Natural killer cell (primary cell): ENCODE measurements at regions of chr11 and their contacts with region 1.

Region 1: GRCh38 chr11:129117595-129118350 is 74.4 kb downstream of the ARHGAP32 start:
- DNase-seq: peak in 1 of 2 donors; percentile 77
- ATAC-seq: peak; percentile 58 to 75 (median 67)
- H3K4me3 ChIP-seq: no peak overlapping the region
- H3K4me3 Mint-ChIP-seq: no peak overlapping the region
- H3K27ac ChIP-seq: no peak overlapping the region
- H3K27ac Mint-ChIP-seq: no peak overlapping the region
- H3K4me1 ChIP-seq: no peaks in the 10 kb centered on the region
- H3K4me1 Mint-ChIP-seq: no peaks in the 10 kb centered on the region
- H3K27me3 ChIP-seq: no peaks in the 10 kb centered on the region
- H3K27me3 Mint-ChIP-seq: no peaks in the 10 kb centered on the region
- CTCF ChIP-seq: peak; percentile 84

Region 2: DNA sequence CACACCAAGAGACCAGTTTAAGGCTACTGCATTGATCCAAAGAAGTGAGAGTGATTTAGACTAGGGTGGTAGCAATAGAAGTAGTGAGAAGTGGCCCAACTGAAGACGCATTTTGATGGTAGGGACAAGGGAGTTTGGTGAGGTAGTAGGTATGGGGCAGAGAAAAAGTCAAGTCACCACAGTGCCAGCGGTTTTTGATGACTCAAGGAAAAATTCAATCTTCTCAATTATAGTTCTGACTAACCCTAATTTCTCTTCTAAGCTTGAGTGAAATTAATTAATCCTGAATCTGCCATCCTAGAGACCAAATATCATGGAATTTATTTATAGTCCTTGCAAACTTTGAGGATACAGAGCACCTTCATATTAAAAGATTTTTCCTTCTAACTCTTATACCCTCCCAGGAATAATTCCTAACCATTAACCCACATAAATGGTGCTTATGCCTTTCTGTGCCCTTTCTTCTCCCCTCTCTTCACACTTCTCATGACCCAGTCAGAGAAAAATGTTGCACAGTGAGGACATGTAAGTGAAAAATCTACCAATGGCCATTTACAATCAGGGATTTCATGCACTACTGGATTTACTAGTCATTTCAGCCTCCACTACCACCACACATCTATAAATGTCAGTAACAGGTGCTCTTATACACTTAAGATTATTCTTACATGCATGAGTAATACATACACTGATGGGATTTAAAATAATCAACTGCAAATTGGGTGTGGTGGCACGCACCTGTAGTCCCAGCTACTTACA is 120.3 kb after region 1 on chr11:
- intact Hi-C with region 1: no loop called
- DNase-seq: no peak
- ATAC-seq: no peak
- H3K4me3 ChIP-seq: no peak overlapping the region
- H3K4me3 Mint-ChIP-seq: no peak overlapping the region
- H3K27ac ChIP-seq: no peak overlapping the region
- H3K27ac Mint-ChIP-seq: no peak overlapping the region
- H3K4me1 ChIP-seq: no peaks in the 10 kb centered on the region
- H3K4me1 Mint-ChIP-seq: no peaks in the 10 kb centered on the region
- H3K27me3 ChIP-seq: no peaks in the 10 kb centered on the region
- H3K27me3 Mint-ChIP-seq: peaks cover 0 to 2% of the 10 kb centered on the region in 2 donors
- CTCF ChIP-seq: no peak

Region 3: DNA sequence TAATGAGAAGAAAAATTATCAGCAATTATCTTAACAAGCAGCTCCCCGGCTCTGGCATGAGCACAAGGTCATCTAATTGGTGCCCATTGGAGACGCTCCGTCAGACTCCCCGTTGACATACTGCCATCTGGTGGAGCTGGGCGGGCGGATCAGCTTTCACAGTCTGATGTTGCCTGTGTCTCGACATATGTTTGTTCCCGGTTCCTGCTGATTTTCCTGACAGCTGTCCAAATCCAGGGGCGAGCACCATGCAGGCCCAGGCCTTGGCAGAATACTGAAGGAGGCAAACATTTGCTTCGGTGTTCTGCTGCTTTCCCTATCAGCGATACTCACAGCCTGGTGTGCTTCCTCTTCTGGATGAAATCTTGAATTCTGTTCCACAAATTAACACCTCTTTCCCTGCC is 214.1 kb after region 1 on chr11:
- intact Hi-C with region 1: loop called (anchors 1 kb)
- DNase-seq: peak; percentile 39 to 71
- ATAC-seq: peak; percentile 47 to 84 (median 59)
- H3K4me3 ChIP-seq: no peak overlapping the region
- H3K4me3 Mint-ChIP-seq: no peak overlapping the region
- H3K27ac ChIP-seq: no peak overlapping the region
- H3K27ac Mint-ChIP-seq: no peak overlapping the region
- H3K4me1 ChIP-seq: no peaks in the 10 kb centered on the region
- H3K4me1 Mint-ChIP-seq: peaks cover 0 to 4% of the 10 kb centered on the region in 2 donors
- H3K27me3 ChIP-seq: no peaks in the 10 kb centered on the region
- H3K27me3 Mint-ChIP-seq: no peaks in the 10 kb centered on the region
- CTCF ChIP-seq: peak; percentile 69

Region 4: DNA sequence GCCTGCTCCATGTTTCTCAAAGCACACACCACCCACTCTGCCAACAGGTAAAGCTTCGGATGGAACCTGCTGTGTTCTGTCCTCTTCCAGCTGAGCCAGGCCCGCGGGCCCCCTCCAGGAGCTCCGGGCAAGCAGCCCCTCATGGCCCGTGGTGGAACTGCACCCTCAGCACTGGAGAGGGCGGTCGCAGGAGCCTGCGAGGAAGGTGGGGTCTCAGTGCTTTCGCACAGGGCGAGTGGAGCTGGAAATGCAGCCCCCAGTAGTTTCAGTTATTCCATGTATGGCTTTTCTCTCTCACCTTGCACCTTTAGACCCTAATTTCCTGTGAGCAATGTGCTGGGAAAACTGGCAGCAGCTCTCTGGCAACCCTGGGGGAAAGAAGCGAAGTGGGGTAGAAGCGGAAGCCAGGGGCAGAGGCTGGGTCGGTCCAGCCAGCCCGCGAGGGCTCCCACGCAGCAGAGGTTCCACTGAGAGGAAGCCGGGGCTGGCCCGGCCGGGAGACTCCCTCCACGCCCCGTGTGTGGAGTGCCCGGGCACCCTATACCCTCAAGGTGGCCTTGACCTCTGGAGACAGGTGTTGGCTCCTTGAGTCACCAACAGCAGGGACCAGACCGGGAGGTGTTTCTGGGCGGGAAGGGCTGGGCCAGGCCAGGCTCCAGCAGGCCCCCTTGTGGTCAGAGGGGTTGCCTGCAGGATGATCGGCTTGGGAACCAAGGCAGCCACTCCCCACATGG is 578.0 kb after region 1 on chr11:
- intact Hi-C with region 1: loop called (anchors 5 kb)
- DNase-seq: peak; percentile 40 to 75
- ATAC-seq: peak; percentile 82 to 96 (median 91)
- H3K4me3 ChIP-seq: peak overlapping the region; percentile 31
- H3K4me3 Mint-ChIP-seq: peak overlapping the region; percentile 80
- H3K27ac ChIP-seq: no peak overlapping the region
- H3K27ac Mint-ChIP-seq: no peak overlapping the region
- H3K4me1 ChIP-seq: peaks cover 12% of the 10 kb centered on the region
- H3K4me1 Mint-ChIP-seq: peaks cover 4 to 5% of the 10 kb centered on the region in 2 donors
- H3K27me3 ChIP-seq: no peaks in the 10 kb centered on the region
- H3K27me3 Mint-ChIP-seq: peaks cover 12 to 17% of the 10 kb centered on the region in 2 donors
- CTCF ChIP-seq: peak; percentile 49

Region 5: DNA sequence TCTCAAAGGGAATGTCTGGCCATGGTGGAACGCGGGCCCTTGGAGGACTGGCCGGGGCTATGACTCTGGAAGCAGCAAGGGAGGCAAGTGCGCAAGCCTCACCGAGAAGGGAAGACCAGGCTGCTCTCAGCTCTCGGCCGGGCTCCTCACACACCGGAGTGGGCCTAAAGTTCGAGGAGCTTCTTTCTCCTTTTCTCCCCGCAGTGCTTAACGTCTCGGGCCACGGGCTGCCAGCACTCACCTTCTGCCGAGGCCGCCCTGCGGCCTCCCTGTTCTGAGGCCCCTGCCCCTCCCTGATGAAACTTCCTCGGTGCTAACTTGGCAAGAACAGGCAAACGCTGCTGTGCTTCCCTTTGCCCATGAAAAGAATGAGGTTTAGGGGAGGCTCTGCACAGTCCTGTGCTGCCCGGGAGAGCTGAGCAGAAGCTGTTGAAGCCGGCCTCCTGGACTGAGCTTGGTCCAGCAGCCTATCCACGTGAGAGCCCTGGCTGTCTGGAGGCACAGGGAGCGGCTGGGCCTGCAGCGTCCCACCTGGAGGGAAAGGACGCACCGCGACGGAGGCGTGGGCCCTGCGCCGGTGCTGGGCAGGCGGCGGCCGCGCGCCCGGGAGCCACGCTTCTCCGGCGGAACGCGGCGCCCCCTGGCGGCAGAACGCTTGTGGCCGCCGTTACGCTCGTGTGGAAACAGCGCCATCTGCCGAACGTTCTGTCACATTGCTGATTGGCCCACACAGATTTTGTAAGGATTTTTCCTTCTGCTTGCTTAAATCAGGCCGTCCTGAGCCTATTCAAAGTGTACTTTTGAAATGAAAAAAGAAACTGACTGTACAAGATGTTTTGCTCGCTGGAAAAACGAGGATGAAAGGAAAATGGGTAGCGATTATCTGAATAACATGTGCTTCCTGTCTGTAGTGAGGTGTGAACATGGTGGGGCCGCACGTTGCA is 632.8 kb after region 1 on chr11:
- intact Hi-C with region 1: loop called (anchors 1 kb)
- DNase-seq: peak; percentile 77 to 91
- ATAC-seq: peak; percentile 95 to 98 (median 96)
- H3K4me3 ChIP-seq: no peak overlapping the region
- H3K4me3 Mint-ChIP-seq: no peak overlapping the region
- H3K27ac ChIP-seq: no peak overlapping the region
- H3K27ac Mint-ChIP-seq: no peak overlapping the region
- H3K4me1 ChIP-seq: peaks cover 5% of the 10 kb centered on the region
- H3K4me1 Mint-ChIP-seq: peaks cover 4 to 5% of the 10 kb centered on the region in 2 donors
- H3K27me3 ChIP-seq: peaks cover 4% of the 10 kb centered on the region
- H3K27me3 Mint-ChIP-seq: peaks cover 7 to 40% of the 10 kb centered on the region in 2 donors
- CTCF ChIP-seq: peak; percentile 100